ENCODE measurements at regions of chr11 and their contacts with region 1.

Region 1: DNA sequence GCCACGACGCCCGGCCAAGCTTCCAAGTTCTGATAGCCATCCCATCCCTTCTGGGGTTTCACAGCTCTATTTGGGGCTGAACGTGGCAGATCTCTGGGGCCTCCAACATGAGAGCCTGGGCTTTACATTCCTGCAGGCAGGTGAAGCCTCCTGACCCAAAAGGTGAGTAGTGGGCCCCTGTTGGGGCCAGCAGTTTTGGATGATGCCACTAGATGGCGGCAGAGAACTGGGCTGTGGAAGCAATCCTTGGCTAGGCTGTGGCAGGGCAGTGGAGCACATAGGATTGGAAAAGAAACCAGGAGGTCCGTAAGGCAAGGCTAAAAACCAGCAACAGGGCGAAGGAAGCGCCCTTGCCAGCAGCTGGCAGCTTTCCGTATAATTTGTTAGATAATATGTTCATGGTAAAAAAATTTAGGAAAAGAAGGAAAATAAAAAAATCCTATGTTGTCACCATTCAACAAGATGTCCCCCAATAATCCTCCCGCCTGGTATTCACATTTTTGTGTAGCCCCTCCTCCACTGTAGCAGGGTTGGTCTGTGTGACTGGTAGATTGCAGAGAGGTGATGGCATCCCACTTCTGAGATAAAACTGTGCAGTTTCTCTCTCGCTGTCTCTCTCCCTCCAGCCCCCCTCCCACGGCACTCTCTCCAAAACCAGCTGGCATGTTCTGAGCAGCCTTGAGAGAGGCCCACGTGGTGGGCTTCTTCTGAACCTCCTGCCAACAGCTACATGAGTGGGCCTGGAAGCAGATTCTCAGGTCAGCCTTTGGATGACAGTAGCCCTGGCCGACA is 43.6 kb upstream of the OR4B1 start:
- DNase-seq: peak; percentile 21 to 67 (median 56)
- ATAC-seq: peak; percentile 69
- H3K4me3 ChIP-seq: no peak overlapping the region
- H3K4me3 Mint-ChIP-seq: no peak overlapping the region
- H3K27ac ChIP-seq: no peak overlapping the region
- H3K27ac Mint-ChIP-seq: peak overlapping the region; percentile 49
- H3K4me1 ChIP-seq: peaks cover 12% of the 10 kb centered on the region
- H3K4me1 Mint-ChIP-seq: peaks cover 29% of the 10 kb centered on the region
- H3K27me3 ChIP-seq: no peaks in the 10 kb centered on the region
- H3K27me3 Mint-ChIP-seq: no peaks in the 10 kb centered on the region
- CTCF ChIP-seq: peak; percentile 81

Region 2: GRCh38 chr11:48184446-48184845 is 11.4 kb after region 1 on chr11:
- CTCF ChIA-PET with region 1: interaction called, 11 read pairs
- POLR2A ChIA-PET with region 1: no interaction called
- intact Hi-C with region 1: no loop called
- DNase-seq: no peak
- ATAC-seq: no peak
- H3K4me3 ChIP-seq: no peak overlapping the region
- H3K4me3 Mint-ChIP-seq: no peak overlapping the region
- H3K27ac ChIP-seq: no peak overlapping the region
- H3K27ac Mint-ChIP-seq: no peak overlapping the region
- H3K4me1 ChIP-seq: no peaks in the 10 kb centered on the region
- H3K4me1 Mint-ChIP-seq: peaks cover 2% of the 10 kb centered on the region
- H3K27me3 ChIP-seq: no peaks in the 10 kb centered on the region
- H3K27me3 Mint-ChIP-seq: no peaks in the 10 kb centered on the region
- CTCF ChIP-seq: no peak

Region 3: GRCh38 chr11:48307760-48308386 is 134.9 kb after region 1 on chr11:
- CTCF ChIA-PET with region 1: interaction called, 17 read pairs
- POLR2A ChIA-PET with region 1: no interaction called
- intact Hi-C with region 1: loop called in 1 of 2 experiments (anchors 1 kb)
- DNase-seq: peak; percentile 40 to 71 (median 51)
- ATAC-seq: no peak
- H3K4me3 ChIP-seq: no peak overlapping the region
- H3K4me3 Mint-ChIP-seq: no peak overlapping the region
- H3K27ac ChIP-seq: no peak overlapping the region
- H3K27ac Mint-ChIP-seq: no peak overlapping the region
- H3K4me1 ChIP-seq: no peaks in the 10 kb centered on the region
- H3K4me1 Mint-ChIP-seq: peaks cover 4% of the 10 kb centered on the region
- H3K27me3 ChIP-seq: no peaks in the 10 kb centered on the region
- H3K27me3 Mint-ChIP-seq: peaks cover 34% of the 10 kb centered on the region
- CTCF ChIP-seq: peak; percentile 75

Region 4: GRCh38 chr11:49533204-49533603 is 1360.2 kb after region 1 on chr11:
- CTCF ChIA-PET with region 1: no interaction called
- POLR2A ChIA-PET with region 1: no interaction called
- intact Hi-C with region 1: loop called in 1 of 2 experiments (anchors 5 kb)
- DNase-seq: no peak
- ATAC-seq: no peak
- H3K4me3 ChIP-seq: no peak overlapping the region
- H3K4me3 Mint-ChIP-seq: no peak overlapping the region
- H3K27ac ChIP-seq: no peak overlapping the region
- H3K27ac Mint-ChIP-seq: no peak overlapping the region
- H3K4me1 ChIP-seq: no peaks in the 10 kb centered on the region
- H3K4me1 Mint-ChIP-seq: no peaks in the 10 kb centered on the region
- H3K27me3 ChIP-seq: no peaks in the 10 kb centered on the region
- H3K27me3 Mint-ChIP-seq: no peaks in the 10 kb centered on the region
- CTCF ChIP-seq: no peak

Measured in CD8-positive, alpha-beta T cell (primary cell).